ENCODE measurements at regions of chr13 and their contacts with region 1.

Region 1: GRCh38 chr13:21014502-21015170 is 46.8 kb downstream of the LATS2 start:
- DNase-seq: peak; percentile 74
- H3K4me3 ChIP-seq: peak overlapping the region; percentile 29; the same call in 1 of the 2 replicates
- H3K27ac ChIP-seq: peak overlapping the region; percentile 97
- H3K27me3 ChIP-seq: no peaks in the 10 kb centered on the region
- CTCF ChIP-seq: no peak

Region 2: DNA sequence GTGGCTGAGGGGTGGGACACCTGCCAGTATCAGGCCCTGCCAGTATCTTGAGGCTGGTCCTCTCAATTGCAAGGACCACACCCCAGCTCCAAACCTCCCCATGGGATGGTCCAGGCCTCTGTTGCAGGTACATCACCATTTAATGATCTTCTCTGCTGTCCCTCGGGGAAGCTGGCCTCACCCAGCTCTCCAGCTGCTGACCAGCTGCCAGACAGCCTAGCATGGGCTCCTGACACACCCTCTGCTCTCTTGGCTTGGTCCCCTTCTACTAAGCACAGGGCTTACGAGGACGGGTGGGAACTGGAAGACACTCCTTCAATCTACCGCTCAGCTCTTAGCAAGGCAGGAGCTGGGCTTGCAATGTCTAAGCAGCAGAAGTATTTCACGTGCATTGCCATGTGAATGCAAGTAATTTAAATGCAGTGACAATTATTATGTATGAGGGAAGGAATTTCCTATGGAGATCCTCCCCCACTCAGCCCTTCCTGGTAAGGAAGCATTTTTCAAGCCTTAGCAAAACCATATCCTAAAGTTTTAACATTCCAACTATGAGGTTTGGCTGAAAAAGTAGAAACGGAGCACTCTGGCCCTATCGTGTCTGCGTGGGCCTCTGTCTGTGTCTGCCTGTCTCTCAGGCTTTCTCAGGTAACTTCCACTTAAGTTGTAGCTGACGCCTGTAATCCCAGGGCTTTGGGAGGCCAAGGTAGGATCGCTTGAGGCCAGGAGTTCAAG is 17.0 kb before region 1 on chr13:
- CTCF ChIA-PET with region 1: interaction called, 5 read pairs
- POLR2A ChIA-PET with region 1: interaction called, 19 read pairs
- DNase-seq: peak; percentile 88
- H3K4me3 ChIP-seq: peak overlapping the region; percentile 8
- H3K27ac ChIP-seq: peak overlapping the region; percentile 97
- H3K27me3 ChIP-seq: no peaks in the 10 kb centered on the region
- CTCF ChIP-seq: no peak

Region 3: GRCh38 chr13:21043898-21044297 is 29.3 kb after region 1 on chr13:
- CTCF ChIA-PET with region 1: interaction called, 4 read pairs
- POLR2A ChIA-PET with region 1: interaction called, 14 read pairs
- DNase-seq: peak; percentile 89
- H3K4me3 ChIP-seq: no peak overlapping the region
- H3K27ac ChIP-seq: peak overlapping the region; percentile 22
- H3K27me3 ChIP-seq: no peaks in the 10 kb centered on the region
- CTCF ChIP-seq: no peak

Region 4: GRCh38 chr13:21069561-21070004 is 54.9 kb after region 1 on chr13:
- CTCF ChIA-PET with region 1: no interaction called
- POLR2A ChIA-PET with region 1: interaction called, 14 read pairs
- DNase-seq: peak; percentile 88
- H3K4me3 ChIP-seq: no peak overlapping the region
- H3K27ac ChIP-seq: peak overlapping the region; percentile 66
- H3K27me3 ChIP-seq: no peaks in the 10 kb centered on the region
- CTCF ChIP-seq: no peak